A673 (cell line): ENCODE measurements at regions of chr13 and their contacts with region 1.

Region 1: GRCh38 chr13:94617389-94618000 is 15.8 kb downstream of the GPR180 start:
- DNase-seq: peak; percentile 55
- H3K4me3 ChIP-seq: no peak overlapping the region
- H3K27ac ChIP-seq: no peak overlapping the region
- H3K4me1 ChIP-seq: peaks cover 3% of the 10 kb centered on the region
- H3K27me3 ChIP-seq: no peaks in the 10 kb centered on the region
- CTCF ChIP-seq: peak; percentile 74

Region 2: DNA sequence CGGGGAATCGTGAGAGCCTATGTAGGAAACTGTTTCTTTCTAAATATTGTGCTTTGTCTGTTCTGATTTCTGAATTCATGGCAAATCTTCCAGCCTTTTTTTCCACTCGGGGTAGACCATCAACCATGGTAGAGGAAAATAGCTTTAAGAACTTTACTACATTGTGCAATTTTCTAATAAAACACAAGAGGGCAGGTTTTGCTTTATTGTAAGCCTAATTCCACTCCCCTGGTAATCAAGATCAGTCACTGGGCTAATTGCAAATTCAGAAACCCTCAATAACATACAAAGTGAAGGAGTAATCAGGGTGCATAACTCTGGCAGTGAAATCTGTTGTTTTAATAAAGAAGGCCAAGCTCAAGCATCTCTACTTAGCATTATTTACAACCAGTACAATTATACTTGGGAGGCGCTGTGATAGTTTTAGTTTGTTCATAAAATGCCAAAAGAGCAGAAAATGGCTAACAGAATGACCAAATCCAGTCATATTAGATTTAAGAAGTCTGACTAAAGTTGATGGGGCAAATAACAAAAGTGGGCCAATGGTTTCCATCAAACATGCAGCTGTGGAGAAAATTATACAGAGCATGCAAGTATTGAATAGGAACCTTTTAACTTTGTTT is 181.8 kb before region 1 on chr13:
- CTCF ChIA-PET with region 1: interaction called, 19 read pairs
- POLR2A ChIA-PET with region 1: no interaction called
- intact Hi-C with region 1: loop called (anchors 1 kb)
- DNase-seq: peak; percentile 75
- H3K4me3 ChIP-seq: no peak overlapping the region
- H3K27ac ChIP-seq: no peak overlapping the region
- H3K4me1 ChIP-seq: no peaks in the 10 kb centered on the region
- H3K27me3 ChIP-seq: no peaks in the 10 kb centered on the region
- CTCF ChIP-seq: peak; percentile 68

Region 3: DNA sequence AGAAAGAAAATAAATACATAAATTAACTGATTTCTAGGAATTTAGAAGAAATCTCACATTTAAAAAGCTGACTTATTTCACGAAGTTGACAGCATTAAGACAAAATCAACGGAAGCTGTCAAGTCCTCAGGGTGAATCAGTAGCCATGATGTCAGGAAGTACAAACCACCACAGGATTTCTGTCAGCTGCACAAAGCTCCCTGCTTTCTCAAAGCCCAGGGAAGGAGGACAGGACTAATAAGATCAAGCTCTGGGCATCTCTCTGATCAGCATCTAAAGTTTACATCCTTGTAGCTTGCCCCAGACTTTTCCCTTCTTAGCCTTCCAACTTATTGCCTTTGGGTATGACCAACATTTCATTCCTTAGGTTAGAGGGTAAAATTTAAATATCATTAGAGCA is 147.4 kb before region 1 on chr13:
- CTCF ChIA-PET with region 1: no interaction called
- POLR2A ChIA-PET with region 1: no interaction called
- intact Hi-C with region 1: no loop called
- DNase-seq: no peak
- H3K4me3 ChIP-seq: no peak overlapping the region
- H3K27ac ChIP-seq: no peak overlapping the region
- H3K4me1 ChIP-seq: no peaks in the 10 kb centered on the region
- H3K27me3 ChIP-seq: no peaks in the 10 kb centered on the region
- CTCF ChIP-seq: no peak

Region 4: DNA sequence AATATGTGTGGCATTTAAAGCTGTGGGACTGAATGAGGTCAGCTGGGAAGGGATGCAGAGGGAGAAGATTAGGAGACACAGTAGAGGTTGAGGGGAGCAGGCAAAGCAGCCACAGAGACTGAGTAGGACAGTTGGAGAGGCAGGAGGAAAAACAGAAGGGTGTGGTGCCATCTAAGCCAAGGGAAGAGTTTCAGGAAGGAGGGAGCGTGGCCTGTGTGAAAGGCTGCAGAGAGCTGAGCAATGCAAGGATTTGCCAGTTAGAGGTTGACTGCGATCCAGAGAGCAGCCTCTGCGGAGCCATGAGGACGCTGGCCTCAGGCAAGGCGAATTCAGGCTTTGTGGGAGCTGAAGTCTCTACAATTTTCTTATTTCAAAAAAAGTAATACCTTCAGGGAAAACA is 65.9 kb after region 1 on chr13:
- CTCF ChIA-PET with region 1: no interaction called
- POLR2A ChIA-PET with region 1: no interaction called
- intact Hi-C with region 1: no loop called
- DNase-seq: no peak
- H3K4me3 ChIP-seq: no peak overlapping the region
- H3K27ac ChIP-seq: no peak overlapping the region
- H3K4me1 ChIP-seq: no peaks in the 10 kb centered on the region
- H3K27me3 ChIP-seq: no peaks in the 10 kb centered on the region
- CTCF ChIP-seq: no peak